AG04449 (cell line): ENCODE measurements at regions of chr15 and their contacts with region 1.

Region 1: GRCh38 chr15:79978655-79979514 is 7.9 kb upstream of the BCL2A1 start:
- DNase-seq: peak; percentile 57
- H3K4me3 ChIP-seq: no peak overlapping the region
- CTCF ChIP-seq: no peak

Region 2: DNA sequence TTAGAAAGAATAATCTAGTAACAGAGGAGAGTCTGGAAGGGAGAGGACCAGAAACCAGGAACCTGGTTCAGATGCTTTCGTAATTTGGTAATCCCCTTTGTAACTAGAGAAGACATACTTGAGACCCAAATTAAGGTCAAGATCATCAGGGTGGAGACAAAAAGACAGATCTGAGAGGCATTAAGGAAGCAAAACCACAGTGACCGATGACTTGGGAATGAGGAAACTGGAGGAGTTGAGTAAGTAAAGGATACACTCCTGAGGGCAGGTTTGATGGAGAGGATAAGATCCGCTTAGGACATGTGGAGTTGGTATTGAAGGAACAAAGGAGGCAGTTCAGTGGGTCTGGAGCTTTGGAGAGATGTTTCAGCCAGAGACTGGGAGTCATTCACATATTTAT is 15.7 kb after region 1 on chr15:
- CTCF ChIA-PET with region 1: interaction called, 15 read pairs
- POLR2A ChIA-PET with region 1: no interaction called
- DNase-seq: no peak
- H3K4me3 ChIP-seq: no peak overlapping the region
- CTCF ChIP-seq: no peak

Region 3: GRCh38 chr15:80114114-80114513 is 135.2 kb after region 1 on chr15:
- CTCF ChIA-PET with region 1: no interaction called
- POLR2A ChIA-PET with region 1: no interaction called
- DNase-seq: no peak
- H3K4me3 ChIP-seq: no peak overlapping the region
- CTCF ChIP-seq: no peak